HEK293T (cell line): ENCODE measurements at regions of chr3 and their contacts with region 1.

Region 1: GRCh38 chr3:32240159-32240545 is 1.7 kb downstream of the CMTM8 start:
- DNase-seq: peak; percentile 72

Region 2: DNA sequence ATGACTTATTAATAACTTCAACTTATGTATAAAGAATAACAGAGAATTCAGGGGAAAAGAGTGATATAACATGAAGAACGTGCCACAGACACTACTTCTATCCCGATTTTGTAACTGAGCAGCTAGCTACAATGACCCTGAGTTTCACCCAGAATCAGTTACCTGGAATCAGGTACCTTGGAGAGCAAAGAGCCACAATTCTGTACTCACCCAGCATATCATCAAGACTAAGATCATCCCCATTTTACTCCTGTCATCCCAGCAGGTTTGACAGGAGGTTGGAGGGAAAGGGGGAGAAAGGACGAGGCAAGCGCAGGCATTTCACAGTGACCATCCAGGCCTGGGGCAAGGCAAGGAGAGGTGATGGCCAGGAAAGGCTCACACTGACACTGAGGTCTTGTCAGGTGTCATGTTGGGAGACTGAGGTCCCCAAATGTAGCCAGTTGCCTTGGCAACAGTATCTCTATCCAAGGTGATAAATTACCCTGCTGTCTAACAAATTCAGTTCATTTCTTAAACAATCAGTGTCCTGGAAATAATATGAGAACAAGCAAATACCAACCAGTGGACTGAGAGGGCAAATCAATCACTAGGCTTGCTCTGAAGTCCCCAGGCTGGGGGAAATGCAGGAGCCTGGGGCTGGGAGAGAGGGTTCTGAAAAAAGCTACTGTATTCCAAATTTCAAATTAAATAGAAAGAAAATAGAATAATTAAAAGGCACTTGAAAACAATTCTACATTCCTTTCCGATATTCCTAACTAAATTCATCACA is 432.0 kb before region 1 on chr3:
- CTCF ChIA-PET with region 1: interaction called, 10 read pairs
- POLR2A ChIA-PET with region 1: no interaction called
- DNase-seq: no peak

Region 3: DNA sequence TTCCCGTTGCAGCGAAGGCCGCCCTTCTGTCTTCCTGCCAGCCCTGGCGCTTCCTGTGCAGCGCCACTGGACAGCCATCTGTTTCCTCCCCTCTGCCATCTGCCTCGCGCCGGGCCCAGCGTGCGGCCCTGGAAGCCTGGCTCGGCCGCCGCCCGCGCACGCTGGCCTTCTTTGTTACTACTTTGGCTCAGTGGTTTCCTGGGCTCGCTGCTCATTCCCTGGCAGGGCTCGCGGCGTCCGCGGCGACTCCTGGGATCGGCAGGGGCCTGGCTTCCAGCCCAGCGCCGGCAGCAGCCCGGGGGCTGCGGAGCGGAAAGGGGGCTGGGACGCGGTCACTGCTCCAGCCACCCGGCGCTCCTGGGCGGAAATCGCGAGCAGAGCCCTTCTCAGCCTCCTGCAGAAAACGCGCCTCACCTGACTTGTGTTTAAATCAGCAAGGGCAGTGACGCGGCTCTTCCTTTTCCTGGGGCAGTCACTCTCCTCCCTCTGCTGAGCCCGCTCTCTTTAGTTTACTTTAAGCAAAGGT is 161.5 kb after region 1 on chr3:
- CTCF ChIA-PET with region 1: no interaction called
- POLR2A ChIA-PET with region 1: no interaction called
- DNase-seq: peak; percentile 32